Panc1 (cell line): ENCODE measurements at regions of chr21 and their contacts with region 1.

Region 1: DNA sequence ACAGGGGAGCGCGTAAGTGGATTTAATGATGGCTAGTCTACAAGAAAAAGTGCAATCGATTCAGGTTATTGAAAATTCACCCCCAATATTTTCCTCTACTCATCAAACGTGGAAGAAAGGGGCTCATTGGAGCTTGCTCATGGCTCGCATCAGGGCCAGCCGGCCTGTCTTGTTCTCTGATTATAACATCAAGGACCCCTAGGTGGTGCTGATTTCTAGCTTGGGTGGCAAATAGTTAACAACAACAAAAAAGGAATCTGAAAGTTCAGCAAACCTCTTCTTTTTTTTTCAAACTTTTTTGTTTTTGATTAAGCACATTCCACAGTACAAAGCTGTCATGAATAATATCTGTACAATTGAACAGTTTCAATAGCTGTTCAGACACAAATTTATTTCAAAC is 35.8 kb upstream of the SOD1 start:
- DNase-seq: no peak
- ATAC-seq: no peak
- H3K4me3 ChIP-seq: no peak overlapping the region
- H3K27ac ChIP-seq: no peak overlapping the region
- H3K4me1 ChIP-seq: no peaks in the 10 kb centered on the region
- H3K27me3 ChIP-seq: no peaks in the 10 kb centered on the region
- CTCF ChIP-seq: peak; percentile 19

Region 2: DNA sequence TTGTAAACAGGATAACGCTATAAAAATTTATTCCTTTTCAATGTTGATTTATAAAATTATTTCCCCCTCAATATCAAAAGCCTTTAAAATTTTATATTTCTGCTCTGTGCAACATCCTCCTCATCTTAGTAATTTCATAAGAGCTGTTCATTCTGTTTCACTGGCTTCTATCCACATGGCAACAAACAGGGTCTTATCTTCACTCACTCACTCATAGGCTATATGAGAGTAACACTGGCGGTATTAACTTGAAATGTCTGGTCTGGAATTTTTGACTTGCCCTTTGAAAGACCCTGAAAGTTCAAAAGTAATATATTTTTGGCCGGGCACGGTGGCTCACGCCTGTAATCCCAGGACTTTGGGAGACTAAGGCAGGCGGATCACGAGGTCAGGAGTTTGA is 664.9 kb before region 1 on chr21:
- CTCF ChIA-PET with region 1: interaction called, 15 read pairs
- POLR2A ChIA-PET with region 1: no interaction called
- in situ Hi-C with region 1: no loop called
- intact Hi-C with region 1: no loop called
- DNase-seq: no peak
- ATAC-seq: no peak
- H3K4me3 ChIP-seq: no peak overlapping the region
- H3K27ac ChIP-seq: no peak overlapping the region
- H3K4me1 ChIP-seq: no peaks in the 10 kb centered on the region
- H3K27me3 ChIP-seq: no peaks in the 10 kb centered on the region
- CTCF ChIP-seq: no peak